ENCODE measurements at regions of chr5 and their contacts with region 1.

Region 1: DNA sequence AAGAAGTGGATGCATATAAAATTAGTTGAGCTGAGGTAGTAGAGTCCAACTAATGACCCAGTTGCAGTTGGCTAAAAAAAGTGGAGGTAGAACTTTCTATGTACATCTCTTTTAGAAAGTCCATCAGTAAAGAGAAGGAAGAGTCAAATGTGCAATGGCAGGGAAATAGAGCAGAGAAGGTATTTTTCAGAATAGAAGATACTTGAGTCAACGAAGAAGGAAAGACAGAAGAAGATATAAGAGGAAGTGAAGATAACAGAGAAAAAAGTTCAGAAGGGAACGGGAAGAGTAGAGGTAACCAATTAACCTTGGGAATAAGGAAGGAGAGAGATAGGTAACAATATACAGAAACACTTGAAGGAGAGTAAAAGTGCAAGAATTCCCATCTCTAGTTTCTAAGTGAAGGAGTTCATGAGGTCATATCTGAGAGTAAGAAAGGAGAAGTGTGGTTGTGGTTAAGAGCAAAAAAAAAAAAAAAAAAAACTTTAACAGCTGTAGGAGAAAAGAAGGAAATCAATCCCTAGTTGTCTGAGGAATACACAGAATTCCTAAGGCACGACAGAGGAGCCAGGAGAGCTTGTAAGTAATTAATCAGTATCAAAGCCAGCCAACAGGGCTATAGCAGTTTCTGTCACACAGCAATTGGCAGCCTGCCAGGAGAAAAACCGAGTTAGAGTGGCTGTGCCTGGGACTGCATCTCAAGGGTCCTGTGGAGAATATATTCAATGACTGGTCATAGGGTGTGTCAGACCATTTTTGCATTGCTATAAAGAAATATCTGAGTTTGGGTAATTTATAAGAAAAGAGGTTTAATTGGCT is 61.0 kb downstream of the ARL15 start:
- DNase-seq: no peak
- H3K4me3 ChIP-seq: no peak overlapping the region
- H3K27ac ChIP-seq: no peak overlapping the region
- H3K4me1 ChIP-seq: peaks cover 3 to 8% (median 7%) of the 10 kb centered on the region in 4 donors
- H3K27me3 ChIP-seq: no peaks in the 10 kb centered on the region
- CTCF ChIP-seq: no peak
- EP300 ChIP-seq: no peak
- POLR2A ChIP-seq: no peak

Region 2: DNA sequence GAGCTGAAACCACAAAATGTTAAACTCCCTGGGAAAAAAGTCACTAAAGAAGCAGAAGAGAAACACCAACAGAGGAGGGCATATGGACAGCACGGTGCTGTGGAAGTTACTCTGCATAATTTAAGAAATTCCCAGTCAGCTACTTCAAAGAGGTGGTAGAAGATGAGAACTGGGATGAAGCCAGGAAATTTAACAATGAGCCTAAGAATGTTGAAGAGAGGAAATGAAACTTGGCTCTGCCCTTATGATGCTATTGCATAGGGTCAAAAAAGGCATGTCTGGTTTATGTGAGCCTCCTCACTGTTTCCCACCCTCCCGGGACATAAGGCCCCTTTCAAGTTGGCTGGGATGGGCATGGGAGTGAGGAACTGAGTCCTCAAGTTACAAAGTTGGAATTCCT is 242.8 kb after region 1 on chr5:
- intact Hi-C with region 1: loop called (anchors 5 kb)
- DNase-seq: no peak
- H3K4me3 ChIP-seq: no peak overlapping the region
- H3K27ac ChIP-seq: no peak overlapping the region
- H3K4me1 ChIP-seq: peaks cover 0 to 9% (median 7%) of the 10 kb centered on the region in 4 donors
- H3K27me3 ChIP-seq: no peaks in the 10 kb centered on the region
- CTCF ChIP-seq: no peak
- EP300 ChIP-seq: no peak
- POLR2A ChIP-seq: no peak

Measured in esophagus muscularis mucosa (tissue), 4 donors.